Activated naive CD4-positive, alpha-beta T cell treated with anti-CD3 and anti-CD28 coated beads for 36 hours (primary cell): ENCODE measurements at regions of chr16 and their contacts with region 1.

Region 1: GRCh38 chr16:69386596-69386995 is 789 bp upstream of the TERF2 start:
- DNase-seq: no peak
- H3K4me3 Mint-ChIP-seq: peak overlapping the region; percentile 97
- H3K27ac Mint-ChIP-seq: peak overlapping the region; percentile 92
- H3K4me1 Mint-ChIP-seq: peaks cover 29% of the 10 kb centered on the region
- H3K27me3 Mint-ChIP-seq: no peaks in the 10 kb centered on the region

Region 2: DNA sequence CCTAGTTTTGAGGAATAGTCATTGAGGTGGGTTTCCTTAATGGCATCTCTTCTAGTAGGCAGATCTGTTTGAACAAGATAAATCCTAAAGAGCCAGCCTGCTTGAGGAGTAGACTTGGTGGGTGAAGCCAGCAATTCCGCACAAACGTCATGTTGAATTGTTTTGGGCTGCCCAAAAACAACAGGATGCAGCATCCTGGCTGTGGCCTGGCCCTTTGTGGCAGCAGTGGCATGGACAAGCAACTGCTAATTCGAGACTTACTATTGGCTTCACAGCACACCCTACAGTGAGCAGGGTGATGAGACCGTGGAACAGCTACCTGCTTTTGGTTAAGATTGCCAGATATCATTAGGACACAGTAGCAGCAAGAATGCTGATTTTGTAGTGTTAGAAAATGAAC is 84.7 kb before region 1 on chr16:
- CTCF ChIA-PET with region 1: no interaction called
- intact Hi-C with region 1: no loop called
- DNase-seq: no peak
- H3K4me3 Mint-ChIP-seq: no peak overlapping the region
- H3K27ac Mint-ChIP-seq: no peak overlapping the region
- H3K4me1 Mint-ChIP-seq: no peaks in the 10 kb centered on the region
- H3K27me3 Mint-ChIP-seq: no peaks in the 10 kb centered on the region

Region 3: DNA sequence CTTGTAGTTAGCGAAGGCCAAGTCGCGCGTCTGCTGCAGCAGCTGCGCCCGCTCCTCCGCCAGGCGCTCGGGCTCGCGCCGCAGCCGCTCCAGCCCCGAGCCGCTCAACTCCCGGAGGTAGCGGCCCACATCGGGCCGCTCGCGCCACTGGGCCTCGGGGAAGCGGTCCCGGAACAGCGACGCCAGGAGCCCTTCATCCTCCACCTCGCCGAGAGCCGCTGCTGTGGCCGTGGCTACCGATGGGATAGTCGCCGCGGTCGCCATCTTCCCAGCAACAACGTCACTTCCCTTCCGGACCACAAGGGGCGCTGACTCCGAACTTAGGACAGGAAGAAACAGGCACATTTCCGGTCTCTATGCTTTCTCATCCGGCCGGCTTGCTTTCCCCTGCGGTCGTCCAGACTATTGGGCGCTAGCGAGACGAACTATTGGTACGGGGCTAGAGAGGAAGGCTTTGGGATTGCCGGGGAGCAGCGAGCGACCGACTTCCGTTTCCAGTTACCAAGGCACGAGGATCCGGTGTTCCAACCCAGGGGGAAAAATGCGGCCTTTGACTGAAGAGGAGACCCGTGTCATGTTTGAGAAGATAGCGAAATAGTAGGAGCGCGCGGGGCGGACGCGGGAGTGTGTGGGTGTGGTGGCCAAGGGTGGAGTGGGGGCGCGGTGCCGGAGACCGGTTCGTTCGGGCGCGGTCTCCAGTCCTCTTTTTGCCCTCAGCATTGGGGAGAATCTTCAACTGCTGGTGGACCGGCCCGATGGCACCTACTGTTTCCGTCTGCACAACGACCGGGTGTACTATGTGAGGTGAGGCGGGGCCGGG is 47.1 kb before region 1 on chr16 and contains the starts of genes COG8 and NIP7:
- CTCF ChIA-PET with region 1: no interaction called
- intact Hi-C with region 1: loop called (anchors 1 kb)
- DNase-seq: peak; percentile 96
- H3K4me3 Mint-ChIP-seq: peak within 1 kb of the TSS; percentile 98
- H3K27ac Mint-ChIP-seq: peak within 1 kb of the TSS; percentile 95
- H3K4me1 Mint-ChIP-seq: peaks cover 53% of the 10 kb centered on the region
- H3K27me3 Mint-ChIP-seq: no peaks in the 10 kb centered on the region
- total RNA-seq, gene COG8: 21.0 to 22.6 TPM
- total RNA-seq, gene NIP7: 35.3 to 36.8 TPM

Region 4: DNA sequence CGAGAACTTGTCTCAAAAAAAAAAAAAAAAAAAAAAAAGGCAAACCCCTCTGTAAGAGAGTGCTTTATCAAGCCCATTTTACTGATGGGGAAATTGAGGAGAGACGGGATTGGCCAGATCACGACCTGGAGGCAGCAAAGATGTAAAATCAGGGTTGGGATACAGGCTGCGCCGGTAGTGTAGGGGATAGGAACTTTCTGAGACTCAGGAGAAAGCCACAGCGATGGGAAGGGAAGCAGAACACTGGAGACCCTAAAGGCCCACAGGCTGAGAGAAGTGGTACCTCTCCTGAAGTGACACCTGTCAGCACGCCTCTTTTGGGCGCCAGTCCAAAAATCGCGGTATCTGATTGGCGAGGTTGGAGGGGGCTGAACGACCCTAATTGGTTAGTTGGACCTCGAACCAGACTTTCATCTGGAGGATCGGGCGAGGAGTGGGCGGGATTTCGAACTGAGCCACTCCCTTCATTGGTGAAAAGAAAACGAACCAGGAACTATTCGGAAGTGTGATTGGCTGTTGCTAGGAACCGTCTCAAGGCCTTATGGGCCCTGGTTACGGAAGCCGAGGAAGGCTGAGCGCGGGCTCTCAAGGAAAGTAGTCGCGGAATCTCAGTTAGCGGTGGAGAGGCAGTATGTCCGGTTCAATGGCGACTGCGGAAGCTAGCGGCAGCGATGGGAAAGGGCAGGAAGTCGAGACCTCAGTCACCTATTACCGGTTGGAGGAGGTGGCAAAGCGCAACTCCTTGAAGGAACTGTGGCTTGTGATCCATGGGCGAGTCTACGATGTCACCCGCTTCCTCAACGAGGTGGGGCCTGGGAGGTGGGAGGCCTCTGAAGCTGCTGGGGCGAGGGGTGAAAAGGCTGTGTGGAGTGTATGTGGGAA is 37.7 kb after region 1 on chr16 and contains the start of gene CYB5B:
- CTCF ChIA-PET with region 1: no interaction called
- intact Hi-C with region 1: loop called (anchors 1 kb)
- DNase-seq: peak; percentile 99
- H3K4me3 Mint-ChIP-seq: peak within 1 kb of the TSS; percentile 95
- H3K27ac Mint-ChIP-seq: peak within 1 kb of the TSS; percentile 93
- H3K4me1 Mint-ChIP-seq: peaks cover 40% of the 10 kb centered on the region
- H3K27me3 Mint-ChIP-seq: no peaks in the 10 kb centered on the region
- total RNA-seq, gene CYB5B: 160 to 172 TPM

Region 5: DNA sequence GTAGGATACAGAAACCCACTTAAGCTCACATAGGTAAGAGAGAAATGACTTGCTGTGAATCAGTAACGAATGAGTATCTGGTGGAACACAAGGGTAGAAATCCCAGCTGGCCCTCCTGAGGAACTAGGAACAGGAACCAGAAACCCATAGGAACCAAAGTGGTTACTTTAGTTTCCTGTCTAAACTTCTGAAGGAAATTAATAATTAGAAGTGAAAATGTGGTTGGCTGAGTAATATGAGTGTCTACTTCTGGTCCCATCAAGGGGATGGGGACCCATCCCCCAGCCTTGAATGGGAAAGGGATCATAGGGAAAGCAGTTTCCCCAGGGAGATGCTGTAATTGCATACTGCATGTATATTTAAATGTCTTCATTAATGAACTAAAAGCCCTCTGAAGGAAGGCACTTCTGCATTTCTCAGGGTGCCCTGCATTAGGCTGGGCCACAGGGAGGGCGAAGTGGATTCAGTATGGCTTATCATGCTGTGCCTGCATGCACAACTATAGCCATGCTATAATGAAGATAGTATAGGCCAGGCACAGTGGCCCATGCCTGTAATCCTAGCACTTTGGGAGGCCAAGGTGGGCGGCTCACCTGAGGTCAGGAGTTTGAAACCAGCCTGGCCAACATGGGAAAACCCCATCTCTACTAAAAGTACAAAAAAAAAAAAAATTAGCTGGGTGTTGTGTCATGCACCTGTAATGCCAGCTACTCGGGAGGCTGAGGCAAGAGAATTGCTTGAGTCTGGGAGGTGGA is 83.4 kb after region 1 on chr16:
- CTCF ChIA-PET with region 1: no interaction called
- intact Hi-C with region 1: no loop called
- DNase-seq: peak; percentile 55
- H3K4me3 Mint-ChIP-seq: no peak overlapping the region
- H3K27ac Mint-ChIP-seq: peak overlapping the region; percentile 75
- H3K4me1 Mint-ChIP-seq: peaks cover 37% of the 10 kb centered on the region
- H3K27me3 Mint-ChIP-seq: no peaks in the 10 kb centered on the region